Naive thymus-derived CD4-positive, alpha-beta T cell (primary cell): ENCODE measurements at regions of chr20 and their contacts with region 1.

Region 1: DNA sequence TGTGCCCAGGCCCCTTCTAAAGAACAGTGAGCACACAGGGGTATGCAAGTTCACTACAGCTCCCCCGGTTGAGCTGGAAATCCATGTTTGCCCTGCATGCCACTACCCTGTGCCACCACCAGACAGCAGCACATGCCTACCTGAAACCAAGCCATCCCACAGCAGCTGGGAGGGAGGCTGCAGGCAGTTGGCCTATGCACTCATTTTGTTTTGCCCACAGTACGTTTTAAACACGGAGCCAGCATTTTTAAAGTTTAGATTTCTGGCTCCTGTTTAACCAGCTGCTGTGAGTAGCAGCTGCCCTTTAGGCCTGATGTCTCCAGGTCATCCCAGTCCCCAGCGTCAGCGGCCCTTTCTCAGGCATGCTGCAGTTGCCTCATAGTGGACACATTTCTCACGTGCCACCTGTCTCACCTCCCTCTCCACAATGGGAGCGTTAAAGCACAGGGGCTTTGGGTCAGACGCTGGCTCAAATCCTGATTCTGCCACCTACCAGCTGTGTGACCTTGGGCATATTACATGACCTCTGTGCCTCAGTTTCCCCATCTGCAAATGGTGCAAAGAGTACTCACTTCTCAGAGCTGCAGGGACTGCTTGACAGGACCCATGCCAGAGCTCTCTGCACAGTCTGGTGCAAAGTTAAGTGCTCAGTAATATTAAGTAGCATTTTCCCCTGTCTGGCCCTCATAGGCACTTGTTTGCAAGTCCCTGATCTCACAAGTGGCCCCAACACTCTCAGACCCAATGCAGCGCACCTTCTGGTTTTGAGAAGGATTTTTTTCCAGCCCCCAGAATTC is 8.1 kb upstream of the UBE2V1 start:
- DNase-seq: peak; percentile 36 to 78 (median 63)
- ATAC-seq: peak; percentile 90
- H3K4me3 ChIP-seq: no peak overlapping the region
- H3K4me3 Mint-ChIP-seq: no peak overlapping the region
- H3K27ac ChIP-seq: no peak overlapping the region
- H3K27ac Mint-ChIP-seq: peak overlapping the region in 2 of 9 donors; percentile 26 to 51
- H3K4me1 ChIP-seq: peaks cover 5% of the 10 kb centered on the region in 2 donors
- H3K4me1 Mint-ChIP-seq: peaks cover 4 to 14% (median 7%) of the 10 kb centered on the region in 7 donors
- H3K27me3 ChIP-seq: no peaks in the 10 kb centered on the region
- H3K27me3 Mint-ChIP-seq: no peaks in the 10 kb centered on the region

Region 2: GRCh38 chr20:50146732-50147662 is 25.9 kb after region 1 on chr20:
- CTCF ChIA-PET with region 1: interaction called, 41 read pairs
- POLR2A ChIA-PET with region 1: interaction called, 131 read pairs
- intact Hi-C with region 1: loop called in 1 of 2 experiments (anchors 2 kb)
- DNase-seq: peak; percentile 50 to 90 (median 85)
- ATAC-seq: peak; percentile 97
- H3K4me3 ChIP-seq: peak overlapping the region; percentile 44
- H3K4me3 Mint-ChIP-seq: peak overlapping the region; percentile 79 to 88 (median 85)
- H3K27ac ChIP-seq: peak overlapping the region; percentile 85
- H3K27ac Mint-ChIP-seq: peak overlapping the region; percentile 96 to 99 (median 98)
- H3K4me1 ChIP-seq: peaks cover 31 to 40% of the 10 kb centered on the region in 2 donors
- H3K4me1 Mint-ChIP-seq: peaks cover 59 to 77% (median 70%) of the 10 kb centered on the region in 7 donors
- H3K27me3 ChIP-seq: no peaks in the 10 kb centered on the region
- H3K27me3 Mint-ChIP-seq: no peaks in the 10 kb centered on the region

Region 3: GRCh38 chr20:50153485-50154377 is 32.6 kb after region 1 on chr20 and contains the start of gene PEDS1:
- CTCF ChIA-PET with region 1: interaction called, 41 read pairs
- POLR2A ChIA-PET with region 1: interaction called, 131 read pairs
- intact Hi-C with region 1: no loop called
- DNase-seq: peak; percentile 72 to 89 (median 81)
- ATAC-seq: peak; percentile 99
- H3K4me3 ChIP-seq: peak within 1 kb of the TSS; percentile 91
- H3K4me3 Mint-ChIP-seq: peak within 1 kb of the TSS; percentile 81 to 93 (median 89)
- H3K27ac ChIP-seq: peak within 1 kb of the TSS; percentile 93
- H3K27ac Mint-ChIP-seq: peak within 1 kb of the TSS; percentile 87 to 98 (median 93)
- H3K4me1 ChIP-seq: peaks cover 22 to 24% of the 10 kb centered on the region in 2 donors
- H3K4me1 Mint-ChIP-seq: peaks cover 38 to 50% (median 43%) of the 10 kb centered on the region in 7 donors
- H3K27me3 ChIP-seq: no peaks in the 10 kb centered on the region
- H3K27me3 Mint-ChIP-seq: no peaks in the 10 kb centered on the region
- total RNA-seq, gene PEDS1: 16.0 to 27.6 (median 20.8) TPM

Region 4: GRCh38 chr20:50179507-50180016 is 58.5 kb after region 1 on chr20:
- CTCF ChIA-PET with region 1: interaction called, 236 read pairs
- POLR2A ChIA-PET with region 1: interaction called, 3 read pairs
- intact Hi-C with region 1: loop called (anchors 1 to 2 kb)
- DNase-seq: no peak
- ATAC-seq: no peak
- H3K4me3 ChIP-seq: no peak overlapping the region
- H3K4me3 Mint-ChIP-seq: no peak overlapping the region
- H3K27ac ChIP-seq: no peak overlapping the region
- H3K27ac Mint-ChIP-seq: no peak overlapping the region
- H3K4me1 ChIP-seq: no peaks in the 10 kb centered on the region
- H3K4me1 Mint-ChIP-seq: peaks cover 0 to 6% (median 0%) of the 10 kb centered on the region in 7 donors
- H3K27me3 ChIP-seq: no peaks in the 10 kb centered on the region
- H3K27me3 Mint-ChIP-seq: peaks cover 3 to 15% (median 8%) of the 10 kb centered on the region in 5 donors

Region 5: GRCh38 chr20:50278674-50279531 is 157.8 kb after region 1 on chr20:
- CTCF ChIA-PET with region 1: no interaction called
- POLR2A ChIA-PET with region 1: no interaction called
- intact Hi-C with region 1: no loop called
- DNase-seq: no peak
- ATAC-seq: no peak
- H3K4me3 ChIP-seq: no peak overlapping the region
- H3K4me3 Mint-ChIP-seq: no peak overlapping the region
- H3K27ac ChIP-seq: no peak overlapping the region
- H3K27ac Mint-ChIP-seq: no peak overlapping the region
- H3K4me1 ChIP-seq: no peaks in the 10 kb centered on the region
- H3K4me1 Mint-ChIP-seq: peaks cover 0 to 7% (median 0%) of the 10 kb centered on the region in 7 donors
- H3K27me3 ChIP-seq: no peaks in the 10 kb centered on the region
- H3K27me3 Mint-ChIP-seq: peaks cover 6 to 8% (median 7%) of the 10 kb centered on the region in 5 donors

Region 6: DNA sequence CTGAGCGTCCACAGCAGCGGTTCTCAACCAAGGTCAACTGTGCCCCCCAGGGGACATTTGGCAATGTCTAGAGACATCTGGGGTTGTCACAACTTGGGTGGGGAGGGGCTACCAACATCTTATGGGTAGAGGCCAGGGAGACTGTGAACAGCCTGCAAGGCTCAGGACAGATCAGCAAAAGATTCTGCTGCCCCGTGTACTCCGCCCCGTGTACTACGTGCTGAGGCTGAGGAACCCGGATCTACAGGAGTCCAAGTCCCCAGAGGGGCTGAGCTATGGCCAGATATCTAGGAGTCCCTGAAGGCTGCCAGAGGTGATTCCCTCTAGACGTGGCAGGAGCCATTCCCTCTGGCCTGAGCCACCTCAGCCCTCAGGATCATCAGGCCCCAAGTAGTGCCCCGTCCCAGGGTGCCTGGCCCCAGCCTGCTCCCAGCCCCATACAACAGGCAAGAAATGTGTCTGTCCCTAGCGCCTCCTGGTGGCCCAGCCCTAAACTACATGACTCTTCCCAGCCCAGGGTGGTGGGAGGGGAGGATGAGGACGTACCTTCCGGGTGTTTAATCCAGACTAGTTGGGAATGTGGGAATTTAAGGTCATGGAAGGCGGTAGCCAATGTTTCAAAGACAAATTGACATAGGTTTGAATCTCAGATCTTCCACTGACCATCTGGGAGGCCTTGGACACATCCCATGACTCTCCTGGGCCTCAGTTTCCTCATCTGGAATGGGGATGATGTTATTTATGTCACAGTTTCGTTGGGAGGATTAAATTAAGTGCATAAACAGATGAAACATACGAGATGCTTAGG is 339.6 kb after region 1 on chr20:
- CTCF ChIA-PET with region 1: interaction called, 3 read pairs
- POLR2A ChIA-PET with region 1: no interaction called
- intact Hi-C with region 1: loop called (anchors 5 to 10 kb)
- DNase-seq: peak; percentile 54 to 87 (median 74)
- ATAC-seq: peak; percentile 95
- H3K4me3 ChIP-seq: no peak overlapping the region
- H3K4me3 Mint-ChIP-seq: no peak overlapping the region
- H3K27ac ChIP-seq: no peak overlapping the region
- H3K27ac Mint-ChIP-seq: peak overlapping the region in 1 of 9 donors; percentile 65
- H3K4me1 ChIP-seq: no peaks in the 10 kb centered on the region
- H3K4me1 Mint-ChIP-seq: peaks cover 0 to 18% (median 4%) of the 10 kb centered on the region in 7 donors
- H3K27me3 ChIP-seq: no peaks in the 10 kb centered on the region
- H3K27me3 Mint-ChIP-seq: peaks cover 5 to 14% (median 7%) of the 10 kb centered on the region in 5 donors